A673 (cell line): ENCODE measurements at regions of chr19 and their contacts with region 1.

Region 1: DNA sequence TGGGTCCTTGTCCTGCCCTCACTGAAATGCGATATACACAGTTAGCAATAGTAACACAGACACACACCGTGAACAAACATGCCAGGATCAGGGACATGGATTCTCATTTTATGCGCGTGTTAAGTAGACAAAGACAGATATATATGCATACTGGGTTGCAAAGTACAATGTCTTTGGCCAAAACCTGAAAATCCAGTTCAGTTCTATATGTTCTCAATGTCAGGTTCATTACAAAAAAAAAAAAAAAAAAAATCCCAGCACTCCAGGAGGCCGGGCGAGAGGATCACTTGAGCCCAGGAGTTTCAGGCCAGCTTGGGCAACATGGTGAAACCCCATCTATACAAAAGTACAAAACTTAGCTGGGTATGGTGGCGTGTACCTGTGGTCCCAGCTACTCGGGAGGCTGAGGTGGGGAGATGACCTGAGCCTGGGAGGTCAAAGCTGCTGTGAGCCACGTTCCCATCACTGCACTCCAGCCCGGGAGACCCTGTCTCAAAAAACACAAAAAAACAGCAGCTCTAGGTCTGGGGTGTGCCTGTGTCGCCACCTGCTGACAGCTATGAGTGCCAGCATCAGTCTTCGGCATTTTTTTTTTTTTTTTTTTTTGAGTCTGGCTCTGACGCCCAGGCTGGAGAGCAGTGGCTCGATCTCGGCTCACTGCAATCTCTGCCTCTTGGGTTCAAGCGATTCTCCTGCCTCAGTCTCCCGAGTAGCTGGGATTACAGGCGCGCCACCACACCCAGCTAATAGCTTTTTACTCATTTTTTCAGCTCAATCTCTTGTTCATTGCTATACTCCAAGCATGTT is 10.3 kb downstream of the AP2S1 start:
- DNase-seq: peak; percentile 81
- H3K4me3 ChIP-seq: no peak overlapping the region
- H3K27ac ChIP-seq: no peak overlapping the region
- H3K4me1 ChIP-seq: no peaks in the 10 kb centered on the region
- H3K27me3 ChIP-seq: no peaks in the 10 kb centered on the region
- CTCF ChIP-seq: peak; percentile 90

Region 2: DNA sequence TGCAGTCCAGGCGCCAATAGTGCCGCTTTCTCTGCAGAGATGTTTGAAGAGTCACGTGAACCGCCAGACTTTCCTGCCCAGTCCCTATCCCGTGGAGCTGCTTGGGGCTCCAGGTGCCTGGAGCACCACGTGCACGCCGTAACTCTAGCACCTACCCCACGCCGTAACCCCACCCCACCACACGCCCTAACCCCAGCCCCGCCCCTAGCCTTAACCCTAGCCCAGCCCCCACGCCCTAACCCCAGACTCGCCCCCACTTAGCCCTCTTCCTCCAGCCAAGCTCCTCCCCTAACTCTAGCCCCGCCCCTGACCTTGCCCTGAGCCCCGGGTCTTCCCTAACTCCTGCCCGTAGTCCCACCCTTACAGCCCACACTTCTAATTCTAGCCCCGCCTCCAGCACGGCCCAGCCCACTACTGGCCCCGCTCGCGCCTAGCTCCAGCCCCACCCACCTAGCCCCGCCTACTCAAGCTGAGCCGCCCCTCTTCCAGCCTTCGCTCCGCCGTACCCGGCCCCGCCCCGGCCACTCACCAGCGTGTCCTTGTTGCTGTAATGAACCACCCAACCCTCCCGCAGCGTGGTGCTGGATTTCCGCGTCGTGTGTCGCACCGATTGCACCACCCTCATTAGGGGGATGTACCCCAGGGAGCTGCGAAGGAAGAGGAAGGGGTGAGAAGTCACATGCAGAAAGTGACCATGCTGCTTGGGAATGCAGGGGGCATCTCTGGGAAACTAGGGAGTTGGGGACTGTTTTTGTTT is 143.0 kb before region 1 on chr19:
- CTCF ChIA-PET with region 1: interaction called, 14 read pairs
- POLR2A ChIA-PET with region 1: no interaction called
- intact Hi-C with region 1: no loop called
- DNase-seq: peak; percentile 97
- H3K4me3 ChIP-seq: peak overlapping the region; percentile 28
- H3K27ac ChIP-seq: peak overlapping the region; percentile 61
- H3K4me1 ChIP-seq: no peaks in the 10 kb centered on the region
- H3K27me3 ChIP-seq: no peaks in the 10 kb centered on the region
- CTCF ChIP-seq: no peak

Region 3: GRCh38 chr19:46753420-46754155 is 86.8 kb before region 1 on chr19:
- CTCF ChIA-PET with region 1: interaction called, 7 read pairs
- POLR2A ChIA-PET with region 1: no interaction called
- intact Hi-C with region 1: loop called (anchors 2 kb)
- DNase-seq: peak; percentile 74
- H3K4me3 ChIP-seq: no peak overlapping the region
- H3K27ac ChIP-seq: no peak overlapping the region
- H3K4me1 ChIP-seq: no peaks in the 10 kb centered on the region
- H3K27me3 ChIP-seq: no peaks in the 10 kb centered on the region
- CTCF ChIP-seq: peak; percentile 75

Region 4: GRCh38 chr19:46825525-46825971 is 14.8 kb before region 1 on chr19:
- CTCF ChIA-PET with region 1: interaction called, 10 read pairs
- POLR2A ChIA-PET with region 1: no interaction called
- intact Hi-C with region 1: no loop called
- DNase-seq: no peak
- H3K4me3 ChIP-seq: no peak overlapping the region
- H3K27ac ChIP-seq: no peak overlapping the region
- H3K4me1 ChIP-seq: peaks cover 3% of the 10 kb centered on the region
- H3K27me3 ChIP-seq: no peaks in the 10 kb centered on the region
- CTCF ChIP-seq: no peak

Region 5: DNA sequence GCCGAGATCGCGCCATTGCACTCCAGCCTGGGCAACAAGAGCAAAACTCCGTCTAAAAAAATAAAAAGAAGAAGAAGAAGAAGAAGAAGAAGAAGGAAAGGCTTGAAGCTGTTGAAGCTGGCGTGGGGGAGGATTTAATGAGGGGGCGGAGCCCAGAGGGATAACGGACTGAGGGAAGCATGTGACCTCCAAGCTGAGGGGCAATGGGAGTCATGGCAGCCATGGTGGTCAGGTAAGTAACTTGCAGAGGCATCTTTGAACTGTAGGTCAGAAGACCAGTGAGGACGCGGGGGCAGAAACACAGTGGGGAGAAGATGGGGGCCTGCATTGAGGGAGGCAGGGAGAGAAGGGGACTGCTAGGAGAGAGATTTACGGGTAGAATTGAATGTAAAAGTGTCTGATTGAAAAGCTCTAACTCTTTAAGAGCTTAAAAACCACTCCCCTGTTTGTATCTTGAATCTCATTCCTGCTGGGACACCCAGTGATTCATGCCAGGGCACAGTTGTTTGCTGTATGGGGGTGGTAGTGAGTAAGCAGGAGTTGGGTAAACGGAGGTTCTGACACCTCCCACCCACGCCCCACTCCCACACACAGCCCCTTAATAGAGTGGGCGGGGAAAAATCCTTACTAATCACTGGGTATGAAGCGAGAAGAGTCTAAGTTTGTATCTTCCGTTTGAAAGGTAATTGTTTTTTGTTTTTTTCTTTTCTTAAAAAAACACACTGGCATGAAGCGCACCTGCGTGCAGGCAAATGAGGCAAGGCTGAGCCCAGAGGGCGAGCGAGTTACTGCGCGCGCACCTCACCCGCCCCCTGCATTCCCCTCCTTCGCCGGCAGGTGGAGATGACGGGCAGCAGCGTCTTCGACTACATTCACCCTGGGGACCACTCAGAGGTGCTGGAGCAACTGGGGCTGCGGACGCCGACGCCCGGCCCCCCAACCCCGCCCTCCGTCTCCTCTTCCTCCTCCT is 195.1 kb after region 1 on chr19:
- CTCF ChIA-PET with region 1: no interaction called
- POLR2A ChIA-PET with region 1: interaction called, 12 read pairs
- intact Hi-C with region 1: no loop called
- DNase-seq: peak; percentile 92
- H3K4me3 ChIP-seq: peak overlapping the region; percentile 56
- H3K27ac ChIP-seq: peak overlapping the region; percentile 57
- H3K4me1 ChIP-seq: peaks cover 8% of the 10 kb centered on the region
- H3K27me3 ChIP-seq: no peaks in the 10 kb centered on the region
- CTCF ChIP-seq: peak; percentile 94